Activated CD4-positive, alpha-beta T cell treated with anti-CD3 and anti-CD28 coated beads, Interleukin-2, amount 10 ng/mL, durations not matched to agents 24 days and 14 days (primary cell): ENCODE measurements at regions of chr15 and their contacts with region 1.

Region 1: DNA sequence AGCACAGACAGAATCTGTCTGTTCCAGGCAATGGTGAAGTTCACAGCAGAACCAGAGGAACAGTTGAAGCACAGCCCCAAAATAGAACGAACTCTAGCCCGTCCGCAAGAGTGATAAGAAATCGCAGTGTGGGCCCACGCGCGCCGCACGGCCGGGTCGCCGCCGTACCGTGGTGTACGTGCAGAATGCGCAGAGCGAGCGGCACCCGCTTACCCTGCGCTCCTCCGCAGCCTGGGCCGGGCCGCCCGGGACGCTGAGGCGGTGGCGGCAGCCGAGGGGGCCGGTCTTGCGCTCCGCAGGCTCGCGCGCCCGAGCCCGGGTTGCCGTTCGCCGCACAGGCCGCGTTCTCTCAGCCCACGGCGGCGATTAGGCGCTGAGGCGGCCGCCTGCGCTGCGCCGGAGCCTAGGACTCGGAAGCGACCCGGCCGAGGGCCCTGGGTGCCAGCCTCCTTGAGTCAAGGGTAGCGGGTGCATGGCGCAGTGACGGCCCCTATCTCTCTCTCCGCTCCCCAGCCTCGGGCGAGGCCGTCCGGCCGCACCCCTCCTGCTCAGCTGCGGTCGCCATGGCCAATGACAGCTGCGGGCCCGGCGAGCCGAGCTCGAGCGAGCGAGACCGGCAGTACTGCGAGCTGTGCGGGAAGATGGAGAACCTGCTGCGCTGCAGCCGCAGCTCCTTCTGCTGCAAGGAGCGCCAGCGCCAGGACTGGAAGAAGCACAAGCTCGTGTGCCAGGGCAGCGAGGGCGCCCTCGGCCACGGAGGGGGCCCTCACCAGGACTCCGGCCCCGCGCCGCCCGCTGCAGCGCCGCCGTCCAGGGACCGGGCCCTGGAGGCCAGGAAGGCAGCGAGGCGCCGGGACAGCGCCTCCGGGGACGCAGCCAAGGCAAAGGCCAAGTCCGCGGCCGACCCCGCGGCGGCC is 20.5 kb downstream of the WDR73 start:
- DNase-seq: peak; percentile 91
- H3K4me3 Mint-ChIP-seq: peak overlapping the region; percentile 97
- H3K27ac Mint-ChIP-seq: peak overlapping the region; percentile 95
- H3K4me1 Mint-ChIP-seq: peaks cover 33% of the 10 kb centered on the region
- H3K27me3 Mint-ChIP-seq: no peaks in the 10 kb centered on the region

Region 2: GRCh38 chr15:84600851-84601838 is 32.4 kb before region 1 on chr15 and contains the start of gene ZSCAN2:
- intact Hi-C with region 1: loop called (anchors 1 kb)
- DNase-seq: peak; percentile 98
- H3K4me3 Mint-ChIP-seq: peak within 1 kb of the TSS; percentile 96
- H3K27ac Mint-ChIP-seq: peak within 1 kb of the TSS; percentile 83
- H3K4me1 Mint-ChIP-seq: peaks cover 50% of the 10 kb centered on the region
- H3K27me3 Mint-ChIP-seq: no peaks in the 10 kb centered on the region
- total RNA-seq, gene ZSCAN2: 6.8 TPM in 2 replicates

Region 3: GRCh38 chr15:84748274-84749110 is 114.9 kb after region 1 on chr15 and contains the start of gene ZNF592:
- intact Hi-C with region 1: loop called (anchors 5 kb)
- DNase-seq: peak; percentile 94
- H3K4me3 Mint-ChIP-seq: peak within 1 kb of the TSS; percentile 97
- H3K27ac Mint-ChIP-seq: peak within 1 kb of the TSS; percentile 94
- H3K4me1 Mint-ChIP-seq: peaks cover 50% of the 10 kb centered on the region
- H3K27me3 Mint-ChIP-seq: no peaks in the 10 kb centered on the region
- total RNA-seq, gene ZNF592: 30.0 and 30.6 TPM in 2 replicates